Activated CD8-positive, alpha-beta memory T cell treated with anti-CD3 and anti-CD28 coated beads, Interleukin-2, amount 10 ng/mL, durations not matched to agents 7 days and 5 days (primary cell): ENCODE measurements at regions of chr20 and their contacts with region 1.

Region 1: DNA sequence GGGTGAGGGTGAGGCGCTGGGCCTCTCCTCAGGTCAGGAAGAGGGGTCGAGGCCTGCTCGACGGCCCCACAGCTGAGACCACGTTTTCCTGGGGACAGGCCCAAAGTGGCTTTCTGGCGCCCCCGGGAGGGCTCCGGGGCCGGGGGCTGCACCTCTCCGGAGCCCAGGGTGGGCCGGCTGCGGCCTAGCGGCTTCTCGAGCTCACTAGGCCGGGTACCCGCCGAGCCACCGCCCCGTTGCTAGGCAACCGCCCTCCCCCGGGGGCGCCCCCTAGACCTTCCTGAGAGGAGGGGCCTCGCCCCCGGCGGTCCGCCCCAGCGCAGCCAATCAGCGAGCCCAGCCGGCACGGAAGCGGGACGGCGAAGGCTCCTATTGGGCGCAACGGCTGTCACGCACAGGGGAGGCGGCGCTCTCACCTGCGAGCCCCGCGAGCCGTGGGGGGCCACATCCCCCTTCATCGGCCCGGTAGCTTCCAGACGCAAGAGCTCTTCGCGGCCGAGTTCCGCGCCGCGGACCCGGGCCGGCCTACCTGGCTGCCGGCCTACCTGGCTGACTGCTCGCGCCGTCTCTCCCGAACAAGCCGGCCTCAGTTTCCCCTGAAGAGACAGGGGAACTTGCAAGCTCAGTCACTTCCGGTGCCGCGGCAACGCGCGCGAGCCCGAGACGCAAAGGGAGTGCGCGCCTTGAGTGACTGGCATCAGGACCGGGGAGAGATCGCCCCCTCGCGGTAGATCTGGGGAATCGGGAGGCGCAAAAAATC is 831 bp upstream of the BCL2L1 start:
- DNase-seq: peak; percentile 99
- ATAC-seq: peak; percentile 91
- H3K4me3 Mint-ChIP-seq: peak overlapping the region; percentile 90
- H3K27ac Mint-ChIP-seq: peak overlapping the region; percentile 97
- H3K4me1 Mint-ChIP-seq: peaks cover 30% of the 10 kb centered on the region
- H3K27me3 Mint-ChIP-seq: no peaks in the 10 kb centered on the region

Region 2: DNA sequence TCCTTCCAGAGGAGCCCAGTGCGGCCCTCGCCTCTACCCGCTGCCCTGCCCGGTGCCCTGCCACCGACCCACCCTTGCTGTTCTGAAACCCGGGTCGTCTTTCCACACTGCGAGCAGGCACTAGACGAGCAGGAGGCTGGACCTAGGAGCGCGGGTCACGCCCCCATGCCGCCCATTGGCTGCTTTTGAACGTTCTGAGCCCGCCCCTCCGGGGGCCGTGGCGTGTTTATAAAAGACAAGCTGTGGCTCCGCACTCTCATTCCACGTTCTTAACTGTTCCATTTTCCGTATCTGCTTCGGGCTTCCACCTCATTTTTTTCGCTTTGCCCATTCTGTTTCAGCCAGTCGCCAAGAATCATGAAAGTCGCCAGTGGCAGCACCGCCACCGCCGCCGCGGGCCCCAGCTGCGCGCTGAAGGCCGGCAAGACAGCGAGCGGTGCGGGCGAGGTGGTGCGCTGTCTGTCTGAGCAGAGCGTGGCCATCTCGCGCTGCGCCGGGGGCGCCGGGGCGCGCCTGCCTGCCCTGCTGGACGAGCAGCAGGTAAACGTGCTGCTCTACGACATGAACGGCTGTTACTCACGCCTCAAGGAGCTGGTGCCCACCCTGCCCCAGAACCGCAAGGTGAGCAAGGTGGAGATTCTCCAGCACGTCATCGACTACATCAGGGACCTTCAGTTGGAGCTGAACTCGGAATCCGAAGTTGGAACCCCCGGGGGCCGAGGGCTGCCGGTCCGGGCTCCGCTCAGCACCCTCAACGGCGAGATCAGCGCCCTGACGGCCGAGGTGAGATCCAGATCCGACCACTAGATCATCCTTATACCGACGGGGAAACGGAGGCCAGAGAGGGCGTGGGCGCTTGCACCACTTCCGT is 118.2 kb before region 1 on chr20 and contains the start of gene ID1:
- CTCF ChIA-PET with region 1: interaction called, 12 read pairs
- DNase-seq: peak; percentile 89
- ATAC-seq: peak; percentile 89
- H3K4me3 Mint-ChIP-seq: peak within 1 kb of the TSS; percentile 78
- H3K27ac Mint-ChIP-seq: peak within 1 kb of the TSS; percentile 47
- H3K4me1 Mint-ChIP-seq: peaks cover 30% of the 10 kb centered on the region
- H3K27me3 Mint-ChIP-seq: peaks cover 75% of the 10 kb centered on the region
- total RNA-seq, gene ID1: not detected

Region 3: GRCh38 chr20:31644701-31645100 is 78.8 kb before region 1 on chr20:
- CTCF ChIA-PET with region 1: interaction called, 685 read pairs
- DNase-seq: no peak
- ATAC-seq: no peak
- H3K4me3 Mint-ChIP-seq: no peak overlapping the region
- H3K27ac Mint-ChIP-seq: no peak overlapping the region
- H3K4me1 Mint-ChIP-seq: peaks cover 21% of the 10 kb centered on the region
- H3K27me3 Mint-ChIP-seq: peaks cover 72% of the 10 kb centered on the region

Region 4: GRCh38 chr20:31674895-31675827 is 48.3 kb before region 1 on chr20:
- CTCF ChIA-PET with region 1: interaction called, 685 read pairs
- DNase-seq: peak; percentile 90
- ATAC-seq: peak; percentile 70
- H3K4me3 Mint-ChIP-seq: peak overlapping the region; percentile 85
- H3K27ac Mint-ChIP-seq: peak overlapping the region; percentile 97
- H3K4me1 Mint-ChIP-seq: peaks cover 91% of the 10 kb centered on the region
- H3K27me3 Mint-ChIP-seq: no peaks in the 10 kb centered on the region

Region 5: DNA sequence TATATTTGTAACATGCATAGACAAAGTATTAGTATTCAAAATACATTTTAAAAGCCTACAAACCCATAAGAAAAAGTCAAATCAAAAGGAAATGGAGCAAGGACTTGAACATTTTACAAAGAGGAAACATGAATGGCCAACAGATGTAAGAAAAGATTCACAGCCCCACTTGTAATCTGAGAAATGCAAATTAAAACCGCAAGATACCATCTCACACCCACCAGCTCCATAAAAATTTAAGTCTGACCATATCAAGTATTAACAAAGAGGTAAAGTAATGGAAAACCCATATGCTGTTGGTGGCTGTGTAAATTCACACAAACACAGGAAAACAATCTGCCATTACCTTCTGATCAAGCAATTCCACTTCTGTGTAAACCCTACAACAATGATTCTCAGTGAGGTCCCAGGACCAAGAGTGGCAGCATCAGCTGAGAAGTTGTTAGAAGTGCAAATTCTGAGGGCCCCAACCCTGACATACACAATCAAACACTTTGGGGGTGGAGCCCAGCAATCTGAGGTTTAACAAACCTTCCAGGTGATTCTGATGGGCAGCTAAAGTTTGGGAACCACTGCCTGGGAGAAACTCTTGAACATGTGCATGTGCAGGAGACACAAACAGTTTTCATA is 31.7 kb before region 1 on chr20:
- CTCF ChIA-PET with region 1: interaction called, 120 read pairs
- DNase-seq: no peak
- ATAC-seq: no peak
- H3K4me3 Mint-ChIP-seq: no peak overlapping the region
- H3K27ac Mint-ChIP-seq: peak overlapping the region; percentile 78
- H3K4me1 Mint-ChIP-seq: peaks cover 57% of the 10 kb centered on the region
- H3K27me3 Mint-ChIP-seq: no peaks in the 10 kb centered on the region

Region 6: GRCh38 chr20:31712564-31713311 is 10.8 kb before region 1 on chr20:
- CTCF ChIA-PET with region 1: interaction called, 48 read pairs
- DNase-seq: no peak
- ATAC-seq: no peak
- H3K4me3 Mint-ChIP-seq: no peak overlapping the region
- H3K27ac Mint-ChIP-seq: no peak overlapping the region
- H3K4me1 Mint-ChIP-seq: peaks cover 89% of the 10 kb centered on the region
- H3K27me3 Mint-ChIP-seq: no peaks in the 10 kb centered on the region